Dendritic cell treated with granulocyte-macrophage colony-stimulating factor and Interleukin-4, amounts not matched to agents 40 ng/mL and 50 ng/mL, for 4 days (primary cell): ENCODE measurements at regions of chr16 and their contacts with region 1.

Region 1: GRCh38 chr16:85821441-85822135 is 22.1 kb downstream of the COX4I1 start:
- H3K4me3 Mint-ChIP-seq: no peak overlapping the region
- H3K27ac Mint-ChIP-seq: no peak overlapping the region
- H3K4me1 Mint-ChIP-seq: peaks cover 19% of the 10 kb centered on the region
- H3K27me3 Mint-ChIP-seq: peaks cover 11% of the 10 kb centered on the region

Region 2: GRCh38 chr16:85688586-85689284 is 132.9 kb before region 1 on chr16 and contains the start of gene GINS2:
- intact Hi-C with region 1: no loop called
- H3K4me3 Mint-ChIP-seq: peak within 1 kb of the TSS; percentile 71
- H3K27ac Mint-ChIP-seq: no peak within 1 kb of the TSS
- H3K4me1 Mint-ChIP-seq: peaks cover 13% of the 10 kb centered on the region
- H3K27me3 Mint-ChIP-seq: peaks cover 11% of the 10 kb centered on the region

Region 3: GRCh38 chr16:85759631-85760419 is 61.8 kb before region 1 on chr16:
- intact Hi-C with region 1: no loop called
- H3K4me3 Mint-ChIP-seq: no peak overlapping the region
- H3K27ac Mint-ChIP-seq: no peak overlapping the region
- H3K4me1 Mint-ChIP-seq: peaks cover 30% of the 10 kb centered on the region
- H3K27me3 Mint-ChIP-seq: peaks cover 13% of the 10 kb centered on the region

Region 4: GRCh38 chr16:85853547-85854545 is 32.3 kb after region 1 on chr16:
- intact Hi-C with region 1: no loop called
- H3K4me3 Mint-ChIP-seq: no peak overlapping the region
- H3K27ac Mint-ChIP-seq: peak overlapping the region; percentile 70
- H3K4me1 Mint-ChIP-seq: peaks cover 72% of the 10 kb centered on the region
- H3K27me3 Mint-ChIP-seq: peaks cover 15% of the 10 kb centered on the region

Region 5: GRCh38 chr16:85869785-85870558 is 48.4 kb after region 1 on chr16:
- intact Hi-C with region 1: loop called (anchors 5 kb)
- H3K4me3 Mint-ChIP-seq: peak overlapping the region; percentile 64
- H3K27ac Mint-ChIP-seq: peak overlapping the region; percentile 98
- H3K4me1 Mint-ChIP-seq: peaks cover 72% of the 10 kb centered on the region
- H3K27me3 Mint-ChIP-seq: peaks cover 13% of the 10 kb centered on the region

Region 6: GRCh38 chr16:85902366-85903155 is 81.0 kb after region 1 on chr16:
- intact Hi-C with region 1: loop called (anchors 5 kb)
- H3K4me3 Mint-ChIP-seq: peak overlapping the region; percentile 84
- H3K27ac Mint-ChIP-seq: peak overlapping the region; percentile 88
- H3K4me1 Mint-ChIP-seq: peaks cover 83% of the 10 kb centered on the region
- H3K27me3 Mint-ChIP-seq: peaks cover 3% of the 10 kb centered on the region

Region 7: GRCh38 chr16:85986931-85987749 is 165.6 kb after region 1 on chr16:
- intact Hi-C with region 1: loop called (anchors 1 kb)
- H3K4me3 Mint-ChIP-seq: no peak overlapping the region
- H3K27ac Mint-ChIP-seq: no peak overlapping the region
- H3K4me1 Mint-ChIP-seq: peaks cover 49% of the 10 kb centered on the region
- H3K27me3 Mint-ChIP-seq: peaks cover 16% of the 10 kb centered on the region

Region 8: DNA sequence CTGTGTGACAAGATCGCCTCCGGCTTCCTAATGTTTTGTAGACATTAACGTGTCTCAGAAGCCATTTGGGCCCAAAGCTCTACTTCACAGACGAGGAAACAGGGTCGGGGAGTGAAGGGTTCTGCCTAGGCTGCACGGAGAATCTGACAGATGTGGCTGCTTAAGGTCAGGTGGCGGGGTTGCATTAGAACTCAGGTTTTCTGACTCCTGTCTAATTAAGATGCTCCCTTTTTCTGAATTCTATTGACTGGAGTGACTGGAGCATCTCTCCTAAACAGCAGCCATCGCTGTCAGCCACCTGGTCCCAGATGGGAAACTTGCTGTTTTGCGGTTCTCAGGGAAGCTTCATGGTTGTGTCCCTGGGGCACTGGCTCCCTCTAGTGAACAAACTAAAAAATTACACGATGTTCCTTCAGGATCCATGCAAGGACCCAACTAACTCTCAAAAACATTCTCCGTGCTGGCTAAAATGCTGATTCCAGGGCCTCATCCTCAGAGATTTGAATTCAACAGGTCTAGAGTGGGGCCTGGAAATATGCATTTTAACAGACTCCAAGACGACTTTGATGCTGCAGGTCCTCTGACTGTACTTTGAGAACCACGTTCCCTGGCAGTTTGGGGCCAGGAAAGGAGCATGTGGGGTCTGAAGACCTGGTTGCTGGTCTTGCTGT is 194.7 kb after region 1 on chr16:
- intact Hi-C with region 1: loop called (anchors 1 kb)
- H3K4me3 Mint-ChIP-seq: no peak overlapping the region
- H3K27ac Mint-ChIP-seq: no peak overlapping the region
- H3K4me1 Mint-ChIP-seq: peaks cover 12% of the 10 kb centered on the region
- H3K27me3 Mint-ChIP-seq: peaks cover 20% of the 10 kb centered on the region

Region 9: GRCh38 chr16:86033016-86033474 is 211.5 kb after region 1 on chr16:
- intact Hi-C with region 1: no loop called
- H3K4me3 Mint-ChIP-seq: no peak overlapping the region
- H3K27ac Mint-ChIP-seq: no peak overlapping the region
- H3K4me1 Mint-ChIP-seq: no peaks in the 10 kb centered on the region
- H3K27me3 Mint-ChIP-seq: peaks cover 47% of the 10 kb centered on the region

Region 10: DNA sequence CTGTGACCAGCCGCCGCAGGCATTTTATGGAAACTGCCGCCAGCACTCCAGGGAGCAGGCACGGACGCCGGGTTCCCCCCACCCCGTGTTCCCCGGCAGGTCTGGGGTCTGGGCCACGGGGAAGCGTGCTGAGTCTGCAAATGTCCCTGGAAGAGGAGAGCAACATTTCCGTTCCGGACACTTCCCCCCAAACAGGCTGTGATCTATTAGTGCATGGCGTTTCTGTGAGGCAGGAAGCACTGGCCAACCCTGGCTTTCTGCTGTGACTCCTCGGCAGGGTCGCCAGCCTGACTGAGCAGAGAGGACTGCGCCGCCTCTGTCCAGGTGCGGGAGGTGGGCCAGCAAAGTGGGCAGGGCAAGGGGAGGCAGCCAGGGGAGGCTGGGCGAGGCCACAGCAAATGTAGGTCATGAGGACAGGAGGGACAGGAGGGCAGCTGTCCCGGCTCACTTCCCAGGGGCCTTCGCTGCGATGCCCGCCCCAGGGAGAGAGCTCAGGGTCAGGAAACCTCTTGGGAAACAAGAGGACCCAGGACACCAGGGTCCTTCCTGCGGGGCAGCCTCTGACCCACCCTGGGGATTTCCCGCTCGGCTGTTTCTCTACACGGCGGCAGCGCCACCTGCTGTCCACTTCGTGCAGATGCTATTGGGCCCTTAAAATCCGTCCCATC is 698.2 kb after region 1 on chr16:
- intact Hi-C with region 1: loop called (anchors 5 kb)
- H3K4me3 Mint-ChIP-seq: peak overlapping the region; percentile 21
- H3K27ac Mint-ChIP-seq: no peak overlapping the region
- H3K4me1 Mint-ChIP-seq: peaks cover 7% of the 10 kb centered on the region
- H3K27me3 Mint-ChIP-seq: peaks cover 74% of the 10 kb centered on the region